Upper lobe of right lung (tissue), 1 donor: ENCODE measurements at regions of chr5 and their contacts with region 1.

Region 1: GRCh38 chr5:135944967-135945560 is 9.7 kb downstream of the LECT2 start:
- DNase-seq: no peak
- ATAC-seq: peak; percentile 82
- H3K4me3 ChIP-seq: no peak overlapping the region
- H3K27ac ChIP-seq: no peak overlapping the region
- H3K4me1 ChIP-seq: no peaks in the 10 kb centered on the region
- H3K27me3 ChIP-seq: peaks cover 12% of the 10 kb centered on the region
- CTCF ChIP-seq: peak; percentile 77

Region 2: DNA sequence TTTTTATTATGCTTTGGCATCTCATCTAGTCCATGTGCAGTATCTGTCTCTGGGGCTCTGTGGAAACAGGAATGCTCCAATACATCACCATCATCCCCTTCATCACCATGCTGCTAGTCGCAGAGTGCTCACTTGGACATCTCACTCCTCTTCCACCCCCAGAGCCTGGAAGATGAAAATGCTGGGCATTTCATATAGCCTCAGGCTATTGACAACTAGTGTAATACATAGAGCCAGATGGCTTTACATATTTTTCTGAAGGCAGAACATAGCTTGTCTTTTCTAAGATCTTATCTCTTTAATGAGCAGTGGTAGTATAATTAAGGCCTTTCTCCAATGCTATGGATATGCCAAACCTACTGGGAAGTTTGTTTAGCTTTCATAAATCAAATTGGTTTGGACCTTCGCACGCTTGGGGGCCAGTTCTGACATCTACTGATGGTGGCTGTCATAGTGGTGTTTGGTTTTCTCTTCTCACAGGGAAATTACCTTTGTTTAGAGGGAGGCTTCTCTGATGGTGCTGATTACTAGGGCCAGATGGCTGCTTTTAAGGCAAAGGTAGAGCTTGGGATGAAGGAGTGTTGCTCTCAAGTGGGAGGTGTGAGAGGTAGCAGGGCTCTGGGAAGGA is 303.2 kb before region 1 on chr5:
- intact Hi-C with region 1: no loop called
- DNase-seq: no peak
- ATAC-seq: no peak
- H3K4me3 ChIP-seq: no peak overlapping the region
- H3K27ac ChIP-seq: no peak overlapping the region
- H3K4me1 ChIP-seq: no peaks in the 10 kb centered on the region
- H3K27me3 ChIP-seq: no peaks in the 10 kb centered on the region
- CTCF ChIP-seq: no peak

Region 3: GRCh38 chr5:135741047-135741446 is 204.0 kb before region 1 on chr5:
- intact Hi-C with region 1: no loop called
- DNase-seq: no peak
- ATAC-seq: no peak
- H3K4me3 ChIP-seq: no peak overlapping the region
- H3K27ac ChIP-seq: no peak overlapping the region
- H3K4me1 ChIP-seq: no peaks in the 10 kb centered on the region
- H3K27me3 ChIP-seq: no peaks in the 10 kb centered on the region
- CTCF ChIP-seq: no peak

Region 4: DNA sequence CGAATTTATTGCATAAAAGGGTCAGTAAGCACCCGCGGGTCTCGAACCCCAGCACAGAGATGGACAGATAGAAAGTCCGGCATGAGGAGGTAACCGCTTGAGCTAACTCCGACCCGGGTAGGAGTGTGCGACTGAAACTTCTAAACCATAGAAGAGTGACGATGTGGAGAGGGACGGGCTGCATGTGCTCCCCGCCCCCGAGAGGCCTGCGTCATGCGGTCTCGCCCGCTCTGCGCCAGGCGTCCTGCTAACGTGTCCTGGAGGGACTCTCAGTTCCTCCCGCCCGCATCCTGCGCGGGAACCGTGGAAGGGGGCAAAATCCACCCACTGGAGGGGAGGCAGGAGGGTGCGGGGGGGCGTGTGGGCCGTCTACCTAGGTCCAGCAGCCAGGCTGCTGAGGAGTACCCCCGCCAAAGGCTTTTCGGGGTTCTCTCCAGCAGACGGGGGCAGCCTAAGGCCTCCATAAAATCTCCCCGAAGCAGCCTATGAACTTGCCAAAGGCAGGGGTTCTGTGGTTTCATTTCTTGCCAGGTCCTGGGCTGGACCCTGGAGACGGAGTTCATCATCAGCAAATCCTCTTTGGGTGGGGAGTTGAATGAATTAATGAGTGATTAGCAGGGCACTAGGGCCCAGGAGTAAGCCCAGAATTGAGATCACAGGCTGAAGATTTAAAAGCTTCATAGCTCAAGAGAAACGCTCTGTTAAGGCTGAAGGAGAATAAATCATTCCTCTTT is 135.6 kb after region 1 on chr5:
- intact Hi-C with region 1: loop called (anchors 10 kb)
- DNase-seq: peak; percentile 94
- ATAC-seq: peak; percentile 97
- H3K4me3 ChIP-seq: peak overlapping the region; percentile 49
- H3K27ac ChIP-seq: peak overlapping the region; percentile 74
- H3K4me1 ChIP-seq: peaks cover 8% of the 10 kb centered on the region
- H3K27me3 ChIP-seq: peaks cover 6% of the 10 kb centered on the region
- CTCF ChIP-seq: no peak